ENCODE measurements at regions of chr11 and their contacts with region 1.

Region 1: DNA sequence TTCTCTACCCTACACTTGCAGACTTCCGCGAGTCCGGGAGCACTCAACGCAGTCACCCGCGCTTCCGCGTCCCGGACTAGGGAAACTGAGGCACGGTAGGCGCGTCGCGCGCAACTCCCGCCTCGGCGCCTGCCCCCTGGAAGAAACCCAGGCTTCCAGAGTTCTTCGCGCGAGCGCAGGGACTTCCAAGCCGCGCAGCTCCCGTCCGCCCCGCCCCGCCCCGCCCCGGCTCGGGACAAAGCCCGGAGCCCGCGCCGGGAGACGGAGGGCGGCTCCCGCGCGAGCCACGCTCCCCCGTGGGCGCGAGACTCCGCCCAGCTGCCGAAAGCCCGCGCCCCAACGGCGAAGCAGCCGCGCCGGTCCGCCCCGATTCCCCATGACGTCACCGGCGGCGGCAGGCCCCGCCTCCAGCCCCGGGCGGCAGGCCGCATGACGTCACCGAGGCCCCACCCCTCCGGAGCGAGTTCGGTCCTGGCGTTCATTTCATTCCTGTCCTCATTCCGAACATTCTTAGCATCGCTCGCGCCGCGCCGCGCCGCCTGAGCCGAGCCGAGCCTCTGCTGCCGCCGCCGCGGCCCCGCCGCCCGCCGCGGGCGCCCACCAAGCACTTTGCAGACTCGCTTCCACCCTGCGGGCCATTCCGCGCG is at the start of gene TEAD1:
- DNase-seq: peak; percentile 96
- ATAC-seq: peak; percentile 99
- total RNA-seq, gene TEAD1: 126 TPM

Region 2: GRCh38 chr11:12331239-12331874 is 342.7 kb before region 1 on chr11:
- intact Hi-C with region 1: loop called (anchors 5 kb)
- DNase-seq: peak; percentile 82
- ATAC-seq: peak; percentile 84

Region 3: GRCh38 chr11:12411806-12412727 is 262.0 kb before region 1 on chr11:
- intact Hi-C with region 1: loop called (anchors 10 kb)
- DNase-seq: no peak
- ATAC-seq: peak; percentile 86

Region 4: GRCh38 chr11:12642040-12642439 is 32.0 kb before region 1 on chr11:
- intact Hi-C with region 1: no loop called
- DNase-seq: no peak
- ATAC-seq: no peak

Region 5: DNA sequence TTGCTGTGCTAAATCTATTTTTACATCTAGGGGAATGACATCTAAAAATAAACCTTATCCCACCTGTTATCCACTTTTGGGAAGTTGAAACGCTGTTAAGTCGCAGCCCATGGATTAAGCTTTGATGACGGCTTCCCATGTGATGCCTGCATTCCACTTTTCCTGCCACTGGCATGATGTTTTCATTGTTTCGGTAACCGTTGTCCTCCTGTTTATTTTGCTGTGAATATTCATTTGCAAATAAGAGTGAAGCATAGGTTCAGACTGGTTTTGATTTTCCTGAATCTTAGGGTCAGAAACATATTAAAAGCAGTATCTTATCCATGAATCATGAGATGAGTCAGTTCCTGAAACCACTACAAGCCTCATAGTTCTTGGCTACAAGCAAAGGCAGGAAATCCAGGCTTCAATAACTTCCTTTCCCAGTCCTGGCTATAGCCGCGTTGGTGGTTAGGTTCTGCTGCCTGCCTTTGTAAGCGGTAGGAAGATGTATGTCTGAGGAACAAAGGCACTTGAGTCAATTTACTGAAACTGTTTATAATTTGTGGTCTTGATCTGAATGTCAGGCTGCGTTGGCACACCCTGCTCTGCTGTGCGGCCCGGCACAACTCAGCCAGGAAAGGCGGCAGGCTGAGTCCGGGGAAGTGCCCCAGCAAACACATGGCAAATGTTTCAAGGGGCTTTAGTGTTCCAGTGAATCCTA is 19.6 kb after region 1 on chr11:
- intact Hi-C with region 1: loop called (anchors 2 kb)
- DNase-seq: no peak
- ATAC-seq: peak; percentile 74

Region 6: GRCh38 chr11:12827929-12828812 is 154.1 kb after region 1 on chr11:
- intact Hi-C with region 1: loop called (anchors 5 kb)
- DNase-seq: no peak
- ATAC-seq: peak; percentile 86